Activated CD4-positive, alpha-beta memory T cell treated with anti-CD3 and anti-CD28 coated beads, Interleukin-2, amount 10 ng/mL, durations not matched to agents 7 days and 5 days (primary cell): ENCODE measurements at regions of chr7 and their contacts with region 1.

Region 1: GRCh38 chr7:74206589-74207120 is 3.2 kb upstream of the LAT2 start:
- DNase-seq: peak; percentile 82
- H3K4me3 Mint-ChIP-seq: peak overlapping the region; percentile 35
- H3K27ac Mint-ChIP-seq: no peak overlapping the region
- H3K4me1 Mint-ChIP-seq: peaks cover 36% of the 10 kb centered on the region
- H3K27me3 Mint-ChIP-seq: no peaks in the 10 kb centered on the region

Region 2: GRCh38 chr7:74051629-74052410 is 154.8 kb before region 1 on chr7:
- CTCF ChIA-PET with region 1: no interaction called
- POLR2A ChIA-PET with region 1: no interaction called
- DNase-seq: no peak
- H3K4me3 Mint-ChIP-seq: no peak overlapping the region
- H3K27ac Mint-ChIP-seq: no peak overlapping the region
- H3K4me1 Mint-ChIP-seq: no peaks in the 10 kb centered on the region
- H3K27me3 Mint-ChIP-seq: no peaks in the 10 kb centered on the region

Region 3: DNA sequence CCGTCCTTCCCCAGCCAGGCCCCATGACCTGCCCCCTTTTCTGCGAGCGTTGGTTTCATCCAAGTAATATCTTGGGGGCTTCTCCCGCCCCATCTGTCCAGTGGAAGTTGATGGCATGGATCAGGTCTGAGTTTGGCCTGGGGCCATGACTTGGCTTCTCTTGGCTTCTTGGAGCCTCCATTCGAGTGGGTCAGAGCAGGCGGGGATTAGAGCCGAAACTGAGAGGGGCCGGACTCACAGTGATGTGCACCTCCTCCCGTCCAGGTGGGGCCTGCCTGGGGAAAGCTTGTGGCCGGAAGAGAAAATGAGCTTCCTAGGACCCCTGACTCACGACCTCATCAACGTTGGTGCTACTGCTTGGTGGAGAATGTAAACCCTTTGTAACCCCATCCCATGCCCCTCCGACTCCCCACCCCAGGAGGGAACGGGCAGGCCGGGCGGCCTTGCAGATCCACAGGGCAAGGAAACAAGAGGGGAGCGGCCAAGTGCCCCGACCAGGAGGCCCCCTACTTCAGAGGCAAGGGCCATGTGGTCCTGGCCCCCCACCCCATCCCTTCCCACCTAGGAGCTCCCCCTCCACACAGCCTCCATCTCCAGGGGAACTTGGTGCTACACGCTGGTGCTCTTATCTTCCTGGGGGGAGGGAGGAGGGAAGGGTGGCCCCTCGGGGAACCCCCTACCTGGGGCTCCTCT is 138.1 kb before region 1 on chr7:
- CTCF ChIA-PET with region 1: interaction called, 19 read pairs
- POLR2A ChIA-PET with region 1: no interaction called
- DNase-seq: no peak
- H3K4me3 Mint-ChIP-seq: no peak overlapping the region
- H3K27ac Mint-ChIP-seq: no peak overlapping the region
- H3K4me1 Mint-ChIP-seq: peaks cover 2% of the 10 kb centered on the region
- H3K27me3 Mint-ChIP-seq: no peaks in the 10 kb centered on the region

Region 4: DNA sequence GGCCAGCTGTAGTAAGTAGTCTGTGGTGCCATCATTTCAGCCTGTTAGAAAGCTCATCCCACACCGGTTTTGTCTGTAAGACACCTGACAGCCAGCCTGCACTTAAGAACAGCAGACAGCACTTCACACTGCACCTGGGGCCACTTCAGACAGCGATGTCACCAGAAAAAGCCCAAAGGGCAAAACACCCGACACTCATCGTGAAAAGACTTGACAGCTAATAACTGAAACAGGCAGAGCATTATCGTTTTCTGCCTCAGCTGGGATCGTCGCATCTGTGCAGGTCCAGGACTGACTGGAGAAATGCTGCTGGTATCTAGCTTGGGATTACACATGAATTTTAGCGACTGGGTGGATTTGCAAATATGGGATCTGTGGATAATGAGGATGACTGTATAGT is 13.6 kb before region 1 on chr7:
- CTCF ChIA-PET with region 1: interaction called, 39 read pairs
- POLR2A ChIA-PET with region 1: interaction called, 4 read pairs
- DNase-seq: no peak
- H3K4me3 Mint-ChIP-seq: no peak overlapping the region
- H3K27ac Mint-ChIP-seq: no peak overlapping the region
- H3K4me1 Mint-ChIP-seq: no peaks in the 10 kb centered on the region
- H3K27me3 Mint-ChIP-seq: no peaks in the 10 kb centered on the region

Region 5: DNA sequence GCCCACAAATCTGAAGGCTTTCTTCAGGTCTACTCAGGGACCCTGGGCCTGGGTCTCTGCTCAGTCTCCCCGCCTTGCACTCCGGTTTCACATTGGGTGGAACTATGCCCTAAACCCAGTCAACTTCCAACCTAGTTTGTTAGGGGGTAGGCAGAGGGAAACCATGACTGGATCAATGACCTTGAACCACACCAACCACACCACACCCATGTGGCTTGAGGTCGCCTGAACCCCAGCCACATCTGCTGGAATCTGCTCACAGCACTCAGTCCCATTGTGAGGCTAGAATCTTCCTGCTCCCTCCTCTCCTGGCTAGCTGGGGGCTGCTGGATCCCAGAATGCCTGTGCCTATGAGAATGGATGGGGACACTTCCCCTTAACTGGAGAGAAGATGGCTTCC is 29.6 kb after region 1 on chr7:
- CTCF ChIA-PET with region 1: interaction called, 11 read pairs
- POLR2A ChIA-PET with region 1: interaction called, 4 read pairs
- DNase-seq: peak; percentile 75
- H3K4me3 Mint-ChIP-seq: peak overlapping the region; percentile 17
- H3K27ac Mint-ChIP-seq: peak overlapping the region; percentile 64
- H3K4me1 Mint-ChIP-seq: peaks cover 31% of the 10 kb centered on the region
- H3K27me3 Mint-ChIP-seq: no peaks in the 10 kb centered on the region

Region 6: GRCh38 chr7:74395745-74396311 is 189.2 kb after region 1 on chr7:
- CTCF ChIA-PET with region 1: interaction called, 170 read pairs
- POLR2A ChIA-PET with region 1: interaction called, 14 read pairs
- DNase-seq: no peak
- H3K4me3 Mint-ChIP-seq: no peak overlapping the region
- H3K27ac Mint-ChIP-seq: no peak overlapping the region
- H3K4me1 Mint-ChIP-seq: peaks cover 2% of the 10 kb centered on the region
- H3K27me3 Mint-ChIP-seq: no peaks in the 10 kb centered on the region